Transverse colon (tissue), 4 donors: ENCODE measurements at regions of chr5 and their contacts with region 1.

Region 1: DNA sequence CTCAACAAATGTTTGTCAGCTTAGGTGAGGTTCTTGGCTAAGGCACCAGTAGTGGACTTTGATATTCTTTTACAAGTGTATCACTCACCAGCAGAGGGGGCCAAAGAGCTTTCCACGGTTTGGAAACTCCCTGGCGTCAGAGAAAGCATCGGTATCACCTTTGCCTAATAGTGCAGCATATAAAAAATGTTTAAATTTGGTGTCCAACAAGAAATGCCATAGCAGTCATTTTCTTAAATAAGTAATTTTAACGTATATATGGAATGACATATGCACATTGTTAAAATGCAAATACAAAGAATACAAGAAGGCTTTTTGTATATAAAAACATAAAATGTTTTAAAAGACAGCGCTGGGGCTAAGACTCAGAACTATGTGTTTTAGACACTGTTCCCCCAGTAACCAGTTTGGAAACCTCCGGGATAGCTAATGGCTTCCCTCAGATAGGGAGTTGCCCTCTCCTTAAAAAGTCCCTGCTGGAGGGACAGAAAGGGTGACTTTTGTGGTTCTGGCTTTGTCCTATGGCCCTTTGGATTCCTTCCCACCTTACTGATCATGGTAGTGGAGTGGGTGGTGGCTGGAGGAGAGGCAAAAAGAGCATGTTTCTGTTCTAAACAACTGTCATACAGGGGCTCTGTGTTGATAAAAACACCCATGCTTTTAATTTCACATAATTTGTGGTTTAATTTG is 124.6 kb downstream of the GPBP1 start:
- DNase-seq: peak; percentile 94
- H3K4me3 ChIP-seq: no peak overlapping the region
- H3K27ac ChIP-seq: peak overlapping the region; percentile 27 to 65 (median 52)
- H3K4me1 ChIP-seq: peaks cover 4 to 10% (median 8%) of the 10 kb centered on the region in 4 donors
- H3K27me3 ChIP-seq: no peaks in the 10 kb centered on the region
- CTCF ChIP-seq: peak; percentile 71 to 80 (median 76)
- EP300 ChIP-seq: no peak
- POLR2A ChIP-seq: no peak

Region 2: GRCh38 chr5:57779383-57780223 is 481.2 kb after region 1 on chr5:
- in situ Hi-C with region 1: loop called in 1 of 4 experiments (anchors 25 kb)
- intact Hi-C with region 1: loop called (anchors 10 kb)
- DNase-seq: no peak
- H3K4me3 ChIP-seq: no peak overlapping the region
- H3K27ac ChIP-seq: no peak overlapping the region
- H3K4me1 ChIP-seq: peaks cover 0 to 25% (median 2%) of the 10 kb centered on the region in 4 donors
- H3K27me3 ChIP-seq: no peaks in the 10 kb centered on the region
- CTCF ChIP-seq: peak; percentile 44 to 59 (median 47)
- EP300 ChIP-seq: no peak
- POLR2A ChIP-seq: no peak